GM12878 (cell line): ENCODE measurements at regions of chr15 and their contacts with region 1.

Region 1: DNA sequence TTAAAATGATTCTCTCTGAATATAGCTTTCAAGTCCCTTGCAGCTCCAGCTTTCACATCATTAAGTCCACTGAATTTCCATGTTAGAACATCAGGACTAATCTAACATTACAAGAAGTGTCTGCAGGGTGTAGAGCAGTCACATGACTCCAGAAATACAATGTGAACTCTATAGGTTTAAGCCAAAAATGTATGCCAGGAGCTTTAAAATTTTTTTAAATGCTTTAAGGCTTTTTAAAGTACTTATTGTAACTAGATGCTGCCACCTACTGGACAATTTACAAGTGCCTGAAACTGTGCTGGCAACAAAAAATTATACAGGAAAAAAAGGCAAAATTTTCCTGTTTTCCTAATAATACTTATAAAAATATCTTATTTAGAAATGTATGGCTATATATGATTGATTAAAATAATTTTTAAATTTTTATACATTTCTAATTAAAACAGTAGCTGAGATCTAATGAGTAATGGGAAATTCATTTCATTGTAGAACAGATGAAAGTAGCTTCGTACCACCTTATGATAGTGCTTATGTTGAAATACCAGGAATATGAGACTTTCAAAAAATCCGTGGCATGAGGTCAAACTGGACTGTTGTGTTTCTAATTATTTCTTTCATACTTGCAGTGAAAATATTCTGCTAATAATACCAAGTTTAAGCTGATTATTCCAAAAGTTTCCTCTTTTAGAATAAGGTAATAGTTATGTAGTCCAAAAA is 25.7 kb downstream of the FSIP1 start:
- DNase-seq: no peak
- ATAC-seq: peak; percentile 50; the same call in 1 of the 3 replicates
- H3K4me3 ChIP-seq: no peak overlapping the region
- H3K27ac ChIP-seq: no peak overlapping the region
- H3K4me1 ChIP-seq: no peaks in the 10 kb centered on the region
- H3K27me3 ChIP-seq: no peaks in the 10 kb centered on the region
- CTCF ChIP-seq: peak; percentile 51 to 67 (median 57)
- EP300 ChIP-seq: no peak
- POLR2A ChIP-seq: no peak
- RAD21 ChIP-seq: peak; percentile 76

Region 2: GRCh38 chr15:38817427-38818156 is 939.4 kb before region 1 on chr15:
- CTCF ChIA-PET with region 1: interaction called, 4 read pairs
- POLR2A ChIA-PET with region 1: no interaction called
- RAD21 ChIA-PET with region 1: no interaction called
- SMC1A ChIA-PET with region 1: interaction called, 3 read pairs
- in situ Hi-C with region 1: no loop called
- intact Hi-C with region 1: loop called (anchors 2 kb)
- DNase-seq: peak; percentile 36
- ATAC-seq: peak; percentile 97
- H3K4me3 ChIP-seq: no peak overlapping the region
- H3K27ac ChIP-seq: no peak overlapping the region
- H3K4me1 ChIP-seq: no peaks in the 10 kb centered on the region
- H3K27me3 ChIP-seq: peaks cover 0 to 2% of the 10 kb centered on the region in 2 experiments; a peak in 1 of 4 replicates
- CTCF ChIP-seq: peak; percentile 95 to 99 (median 99)
- EP300 ChIP-seq: no peak
- POLR2A ChIP-seq: no peak
- RAD21 ChIP-seq: peak; percentile 77

Region 3: GRCh38 chr15:39444735-39445470 is 312.1 kb before region 1 on chr15:
- CTCF ChIA-PET with region 1: no interaction called
- POLR2A ChIA-PET with region 1: no interaction called
- RAD21 ChIA-PET with region 1: no interaction called
- SMC1A ChIA-PET with region 1: no interaction called
- in situ Hi-C with region 1: no loop called
- intact Hi-C with region 1: no loop called
- DNase-seq: no peak
- ATAC-seq: no peak
- H3K4me3 ChIP-seq: no peak overlapping the region
- H3K27ac ChIP-seq: no peak overlapping the region
- H3K4me1 ChIP-seq: no peaks in the 10 kb centered on the region
- H3K27me3 ChIP-seq: no peaks in the 10 kb centered on the region
- CTCF ChIP-seq: no peak
- EP300 ChIP-seq: no peak
- POLR2A ChIP-seq: no peak
- RAD21 ChIP-seq: no peak

Region 4: GRCh38 chr15:39586387-39587171 is 170.4 kb before region 1 on chr15:
- CTCF ChIA-PET with region 1: interaction called, 68 read pairs
- POLR2A ChIA-PET with region 1: no interaction called
- RAD21 ChIA-PET with region 1: interaction called, 23 read pairs
- SMC1A ChIA-PET with region 1: interaction called, 34 read pairs
- in situ Hi-C with region 1: no loop called
- intact Hi-C with region 1: loop called (anchors 1 kb)
- DNase-seq: no peak
- ATAC-seq: no peak
- H3K4me3 ChIP-seq: no peak overlapping the region
- H3K27ac ChIP-seq: no peak overlapping the region
- H3K4me1 ChIP-seq: no peaks in the 10 kb centered on the region
- H3K27me3 ChIP-seq: peaks cover 2 to 3% of the 10 kb centered on the region in 2 experiments
- CTCF ChIP-seq: no peak
- EP300 ChIP-seq: no peak
- POLR2A ChIP-seq: no peak
- RAD21 ChIP-seq: no peak

Region 5: GRCh38 chr15:39666677-39667076 is 90.3 kb before region 1 on chr15:
- CTCF ChIA-PET with region 1: interaction called, 13 read pairs
- POLR2A ChIA-PET with region 1: no interaction called
- RAD21 ChIA-PET with region 1: interaction called, 9 read pairs
- SMC1A ChIA-PET with region 1: interaction called, 10 read pairs
- in situ Hi-C with region 1: no loop called
- intact Hi-C with region 1: no loop called
- DNase-seq: no peak
- ATAC-seq: no peak
- H3K4me3 ChIP-seq: no peak overlapping the region
- H3K27ac ChIP-seq: no peak overlapping the region
- H3K4me1 ChIP-seq: no peaks in the 10 kb centered on the region
- H3K27me3 ChIP-seq: no peaks in the 10 kb centered on the region
- CTCF ChIP-seq: no peak
- EP300 ChIP-seq: no peak
- POLR2A ChIP-seq: no peak
- RAD21 ChIP-seq: no peak

Region 6: DNA sequence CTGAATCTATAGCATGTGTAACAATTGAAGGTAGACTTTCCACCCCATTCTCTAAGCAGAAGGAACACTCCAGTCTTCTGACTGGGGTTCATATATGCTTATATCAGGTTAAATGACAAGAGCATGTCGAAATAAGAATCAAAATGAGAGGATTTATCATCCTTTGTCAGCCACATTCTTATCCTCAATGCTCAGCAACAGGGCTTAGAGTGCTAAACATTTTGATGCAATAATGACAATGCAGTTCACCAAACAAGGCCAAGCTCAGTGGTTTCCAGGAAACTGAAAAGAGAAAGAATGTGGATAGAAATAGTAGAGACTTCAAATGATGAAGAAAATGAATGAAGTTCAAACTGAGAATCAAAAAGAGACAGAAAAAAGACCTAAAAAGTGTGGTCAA is 52.3 kb before region 1 on chr15:
- CTCF ChIA-PET with region 1: interaction called, 36 read pairs
- POLR2A ChIA-PET with region 1: no interaction called
- RAD21 ChIA-PET with region 1: interaction called, 8 read pairs
- SMC1A ChIA-PET with region 1: interaction called, 39 read pairs
- in situ Hi-C with region 1: no loop called
- intact Hi-C with region 1: no loop called
- DNase-seq: no peak
- ATAC-seq: no peak
- H3K4me3 ChIP-seq: no peak overlapping the region
- H3K27ac ChIP-seq: no peak overlapping the region
- H3K4me1 ChIP-seq: no peaks in the 10 kb centered on the region
- H3K27me3 ChIP-seq: no peaks in the 10 kb centered on the region
- CTCF ChIP-seq: no peak
- EP300 ChIP-seq: no peak
- POLR2A ChIP-seq: no peak
- RAD21 ChIP-seq: no peak

Region 7: DNA sequence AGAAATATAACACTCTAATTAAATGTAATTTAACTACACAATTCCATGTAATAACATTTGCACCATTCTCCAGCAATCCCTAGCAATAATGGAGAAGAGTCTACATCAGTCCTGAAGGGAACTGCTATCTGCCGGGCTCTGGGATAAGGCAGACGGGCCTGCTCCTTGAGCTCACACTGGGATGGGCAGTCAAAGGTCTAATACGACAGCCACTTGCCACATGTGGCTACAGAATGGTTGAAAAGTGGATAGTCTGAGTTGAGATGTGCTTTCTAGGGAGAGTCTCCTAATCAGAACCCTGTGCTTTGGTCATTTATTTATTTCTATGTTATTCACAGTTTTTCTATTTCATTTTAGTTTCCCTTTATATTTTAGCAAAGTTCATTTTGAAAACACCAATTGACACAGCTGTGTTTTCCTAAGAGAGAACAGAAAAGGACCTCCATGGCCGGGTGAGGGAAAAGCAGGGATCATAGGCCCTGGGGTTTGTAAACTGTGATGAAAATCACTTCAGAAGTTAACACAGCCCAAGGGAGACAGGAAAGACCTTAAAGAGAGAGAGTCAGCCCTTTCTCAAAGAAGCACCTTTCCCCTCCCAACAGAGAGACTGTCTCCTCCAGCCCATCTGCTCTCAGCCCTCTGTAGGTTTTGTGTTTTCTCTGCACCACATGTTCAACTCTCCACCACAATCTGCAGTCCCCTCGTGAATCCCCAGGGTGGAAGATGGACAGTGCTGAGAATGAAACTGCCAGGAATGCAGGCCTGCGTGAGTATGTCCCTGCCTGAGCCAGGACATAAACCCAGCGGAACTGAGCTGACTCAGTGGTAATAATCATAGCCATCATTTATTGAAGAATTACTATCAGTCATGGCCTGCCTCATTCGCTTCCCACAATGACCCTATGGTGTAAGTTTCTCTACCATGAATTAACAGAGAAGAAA is 14.1 kb after region 1 on chr15:
- CTCF ChIA-PET with region 1: interaction called, 50 read pairs
- POLR2A ChIA-PET with region 1: no interaction called
- RAD21 ChIA-PET with region 1: interaction called, 3 read pairs
- SMC1A ChIA-PET with region 1: interaction called, 28 read pairs
- in situ Hi-C with region 1: no loop called
- intact Hi-C with region 1: no loop called
- DNase-seq: no peak
- ATAC-seq: peak; percentile 53
- H3K4me3 ChIP-seq: no peak overlapping the region
- H3K27ac ChIP-seq: no peak overlapping the region
- H3K4me1 ChIP-seq: peaks cover 9% of the 10 kb centered on the region
- H3K27me3 ChIP-seq: no peaks in the 10 kb centered on the region
- CTCF ChIP-seq: no peak
- EP300 ChIP-seq: no peak
- POLR2A ChIP-seq: no peak
- RAD21 ChIP-seq: no peak